AG04449 (cell line): ENCODE measurements at regions of chr11 and their contacts with region 1.

Region 1: GRCh38 chr11:60775420-60775961 is 9.6 kb upstream of the MS4A10 start:
- DNase-seq: peak; percentile 60
- H3K4me3 ChIP-seq: no peak overlapping the region
- CTCF ChIP-seq: peak; percentile 75

Region 2: DNA sequence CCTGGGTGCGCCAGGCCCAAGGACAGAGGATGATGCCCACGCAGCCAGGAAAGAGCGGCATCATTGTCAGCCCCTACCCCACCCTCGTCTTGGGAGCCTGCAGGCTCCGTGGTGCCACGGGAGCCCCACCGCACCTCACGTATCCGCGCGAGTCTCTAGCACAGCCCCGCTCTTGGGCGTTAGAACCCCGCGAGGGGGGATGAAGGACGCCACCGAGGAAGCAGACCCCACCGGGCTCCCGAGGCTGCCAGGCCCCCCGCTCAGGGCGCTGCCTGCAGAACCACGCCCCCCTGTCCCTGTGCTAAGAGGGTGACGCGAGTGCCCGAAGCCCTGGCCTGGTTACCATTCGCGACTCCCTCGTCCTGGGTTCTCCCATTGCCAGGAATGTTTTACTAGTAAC is 128.4 kb before region 1 on chr11:
- CTCF ChIA-PET with region 1: no interaction called
- POLR2A ChIA-PET with region 1: no interaction called
- DNase-seq: no peak
- H3K4me3 ChIP-seq: no peak overlapping the region
- CTCF ChIP-seq: no peak

Region 3: DNA sequence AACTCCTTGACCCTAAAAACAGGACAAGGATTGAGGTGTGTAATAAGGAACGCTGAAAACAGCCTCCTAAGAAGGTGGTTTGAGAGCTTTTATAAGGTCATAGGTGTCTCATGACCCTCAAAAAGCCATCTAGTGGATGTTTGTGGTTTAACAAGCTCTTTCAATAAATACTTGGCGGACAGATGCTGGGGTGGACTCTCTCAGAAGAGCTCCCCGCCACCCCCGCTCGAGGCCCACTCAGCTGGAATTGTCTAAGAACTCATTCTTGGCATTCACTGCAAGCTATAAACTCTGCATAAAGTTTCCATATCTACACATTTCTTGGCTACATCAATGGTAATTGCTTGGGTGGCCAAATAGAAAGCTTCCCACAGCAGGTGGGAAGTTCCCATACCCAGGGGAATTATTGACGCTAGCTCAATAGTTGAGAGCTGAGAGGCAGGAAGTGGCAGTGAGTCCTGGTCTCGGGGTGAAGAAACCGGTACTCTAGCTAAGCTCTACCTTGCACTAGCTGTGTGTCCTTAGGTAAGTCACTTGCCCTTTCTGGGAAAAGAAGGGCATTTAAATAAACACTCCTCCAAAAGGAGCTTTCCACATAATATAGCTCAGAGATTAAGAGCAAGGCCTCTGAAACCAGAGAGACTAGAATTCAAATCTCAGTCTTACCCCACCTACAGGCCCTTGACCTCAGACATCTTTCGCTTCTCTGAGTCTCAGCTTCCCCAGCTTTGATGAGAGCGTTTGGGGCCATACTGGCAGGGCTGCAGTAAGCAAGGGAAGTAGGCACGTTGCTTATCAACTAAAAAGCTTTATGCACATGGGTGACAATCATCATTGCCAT is 12.4 kb before region 1 on chr11:
- CTCF ChIA-PET with region 1: interaction called, 101 read pairs
- POLR2A ChIA-PET with region 1: no interaction called
- DNase-seq: no peak
- H3K4me3 ChIP-seq: no peak overlapping the region
- CTCF ChIP-seq: no peak

Region 4: DNA sequence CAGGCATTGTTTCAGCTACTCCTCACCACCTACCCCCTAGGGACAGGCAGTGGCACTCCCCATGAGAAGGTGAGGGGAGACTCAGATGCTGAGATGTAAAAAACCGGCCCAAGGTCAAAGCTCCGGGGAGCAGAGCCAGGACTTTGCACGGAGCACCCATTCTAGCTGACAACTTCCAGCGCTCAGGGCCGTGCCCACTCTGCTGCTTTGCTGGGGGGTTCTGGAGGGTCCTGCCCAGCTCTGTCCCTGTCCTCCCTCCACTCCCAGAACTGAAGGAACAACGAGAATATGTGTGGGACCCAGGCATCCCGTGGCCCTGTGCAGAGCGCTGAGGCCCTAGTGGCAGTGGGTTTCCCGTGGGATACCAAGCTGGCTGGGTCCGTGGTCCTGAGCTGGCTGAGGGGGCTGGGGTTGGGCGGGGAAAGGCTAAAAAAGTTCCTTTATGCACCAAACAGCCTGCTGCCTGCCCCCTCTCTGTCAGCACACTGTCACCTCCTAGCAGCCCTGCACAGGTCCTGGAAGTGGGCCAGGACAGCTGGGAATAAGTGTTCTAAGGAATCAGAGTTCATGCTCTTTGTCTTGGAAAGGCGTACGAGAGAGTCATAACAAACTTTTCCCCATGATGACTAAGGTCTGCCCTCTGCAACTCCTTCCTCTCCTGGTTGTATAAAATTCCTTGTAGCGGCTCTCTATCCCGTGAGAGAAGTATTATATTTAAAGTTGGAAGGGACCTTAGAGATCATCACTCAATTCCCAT is 11.5 kb after region 1 on chr11:
- CTCF ChIA-PET with region 1: interaction called, 10 read pairs
- POLR2A ChIA-PET with region 1: no interaction called
- DNase-seq: peak; percentile 42
- H3K4me3 ChIP-seq: no peak overlapping the region
- CTCF ChIP-seq: no peak

Region 5: GRCh38 chr11:60887556-60887955 is 112.1 kb after region 1 on chr11:
- CTCF ChIA-PET with region 1: interaction called, 80 read pairs
- POLR2A ChIA-PET with region 1: no interaction called
- DNase-seq: no peak
- H3K4me3 ChIP-seq: no peak overlapping the region
- CTCF ChIP-seq: peak; percentile 72

Region 6: DNA sequence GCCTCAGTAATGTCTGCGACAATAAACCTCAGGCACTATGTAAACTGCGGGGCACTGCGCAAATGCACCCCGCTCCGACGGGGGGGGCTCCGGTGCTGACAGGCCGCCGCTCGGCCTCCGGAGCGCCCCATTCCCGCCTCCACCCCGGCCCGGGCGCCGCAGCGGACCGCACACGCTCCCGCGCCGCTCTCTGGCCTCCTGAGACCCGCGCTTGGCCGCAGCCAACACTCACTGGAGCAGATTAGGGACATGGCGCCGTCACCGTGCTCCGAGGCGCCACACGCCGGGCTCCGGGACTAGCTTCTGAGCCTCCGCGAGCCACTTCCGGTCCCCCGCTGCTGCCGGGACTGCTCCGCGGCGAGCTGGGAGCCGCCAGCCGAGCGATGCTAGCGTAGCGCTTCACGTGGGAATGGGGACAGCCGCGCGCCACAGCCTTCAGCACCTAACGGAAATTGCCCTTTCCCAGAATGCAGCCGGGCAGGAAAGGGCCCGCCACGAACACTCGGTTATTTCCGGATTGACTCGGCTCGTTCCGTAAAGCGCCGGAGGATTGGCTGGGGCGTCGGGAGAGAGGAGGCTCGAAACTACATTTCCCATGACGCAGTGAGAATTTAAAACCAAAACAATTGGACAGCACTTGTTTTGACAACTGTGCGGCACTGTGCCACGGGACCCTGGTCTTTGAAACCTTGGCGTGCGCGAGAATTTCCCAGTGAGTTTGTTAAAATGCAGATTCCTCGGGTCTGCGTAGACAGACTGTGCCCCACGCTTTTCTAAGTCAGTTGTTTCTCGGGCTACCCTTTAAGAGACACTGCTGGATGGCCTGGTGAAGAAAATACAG is 130.9 kb after region 1 on chr11 and contains the start of gene PRPF19:
- CTCF ChIA-PET with region 1: interaction called, 105 read pairs
- POLR2A ChIA-PET with region 1: no interaction called
- DNase-seq: peak; percentile 47
- H3K4me3 ChIP-seq: peak within 1 kb of the TSS; percentile 85
- CTCF ChIP-seq: no peak